ENCODE measurements at regions of chr6 and their contacts with region 1.

Region 1: DNA sequence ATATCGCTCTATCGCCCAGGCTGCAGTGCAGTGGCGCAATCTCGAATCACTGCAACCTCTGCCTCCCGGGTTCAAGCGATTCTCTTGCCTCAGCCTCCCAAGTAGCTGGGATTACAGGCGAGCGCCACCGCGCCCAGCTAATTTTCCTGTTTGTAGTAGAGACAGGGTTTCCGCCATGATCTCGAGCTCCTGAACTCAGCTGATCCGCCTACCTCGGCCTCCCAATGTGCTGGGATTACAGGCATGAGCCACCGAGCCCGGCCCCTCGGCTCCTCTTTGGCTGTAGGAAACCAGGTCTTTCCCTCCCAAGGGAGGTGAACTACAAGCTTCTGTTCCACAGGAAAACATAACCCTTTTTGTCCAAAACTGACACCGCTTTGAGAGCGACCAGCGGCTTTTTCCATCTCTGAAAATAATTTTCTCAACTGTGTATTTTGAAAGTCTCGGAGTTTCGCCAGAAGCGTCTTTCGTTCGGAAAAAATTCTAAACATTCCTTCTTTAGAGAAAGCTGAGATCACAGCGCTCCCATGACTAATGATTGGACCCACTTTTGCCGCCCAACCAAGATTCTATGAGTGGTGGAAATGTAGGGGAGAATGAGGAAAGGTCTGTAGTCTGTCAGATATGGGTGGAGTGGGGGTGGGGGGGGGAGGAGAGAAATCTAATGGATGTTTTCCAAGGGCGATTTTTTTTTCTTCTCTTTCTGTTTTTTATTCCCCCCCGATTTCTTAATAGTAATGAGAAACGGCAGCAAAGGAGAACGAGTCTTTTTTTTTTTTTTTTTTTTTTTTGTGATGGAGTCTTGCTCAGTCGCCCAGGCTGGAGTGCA is 189.4 kb downstream of the TRIM27 start:
- DNase-seq: no peak
- ATAC-seq: no peak
- H3K4me3 ChIP-seq: no peak overlapping the region
- H3K4me3 Mint-ChIP-seq: no peak overlapping the region
- H3K27ac ChIP-seq: no peak overlapping the region
- H3K27ac Mint-ChIP-seq: no peak overlapping the region
- H3K4me1 ChIP-seq: peaks cover under 1% of the 10 kb centered on the region
- H3K4me1 Mint-ChIP-seq: peaks cover 8% of the 10 kb centered on the region
- H3K27me3 ChIP-seq: peaks cover 47 to 71% of the 10 kb centered on the region in 2 experiments
- H3K27me3 Mint-ChIP-seq: peaks cover 84% of the 10 kb centered on the region
- CTCF ChIP-seq: no peak

Region 2: GRCh38 chr6:28383235-28384142 is 350.9 kb before region 1 on chr6:
- CTCF ChIA-PET with region 1: no interaction called
- POLR2A ChIA-PET with region 1: no interaction called
- intact Hi-C with region 1: no loop called
- DNase-seq: peak in 7 of 9 experiments; percentile 2 to 64 (median 35)
- ATAC-seq: peak; percentile 62
- H3K4me3 ChIP-seq: peak overlapping the region; percentile 9 to 17
- H3K4me3 Mint-ChIP-seq: peak overlapping the region; percentile 75
- H3K27ac ChIP-seq: peak overlapping the region in 1 of 2 experiments; percentile 17
- H3K27ac Mint-ChIP-seq: peak overlapping the region; percentile 24
- H3K4me1 ChIP-seq: no peaks in the 10 kb centered on the region
- H3K4me1 Mint-ChIP-seq: peaks cover 19% of the 10 kb centered on the region
- H3K27me3 ChIP-seq: no peaks in the 10 kb centered on the region
- H3K27me3 Mint-ChIP-seq: no peaks in the 10 kb centered on the region
- CTCF ChIP-seq: no peak

Region 3: GRCh38 chr6:28758046-28758817 is 23.9 kb after region 1 on chr6:
- CTCF ChIA-PET with region 1: no interaction called
- POLR2A ChIA-PET with region 1: no interaction called
- intact Hi-C with region 1: loop called in 1 of 2 experiments (anchors 2 kb)
- DNase-seq: no peak
- ATAC-seq: no peak
- H3K4me3 ChIP-seq: no peak overlapping the region
- H3K4me3 Mint-ChIP-seq: no peak overlapping the region
- H3K27ac ChIP-seq: no peak overlapping the region
- H3K27ac Mint-ChIP-seq: no peak overlapping the region
- H3K4me1 ChIP-seq: no peaks in the 10 kb centered on the region
- H3K4me1 Mint-ChIP-seq: peaks cover 2% of the 10 kb centered on the region
- H3K27me3 ChIP-seq: peaks cover 10 to 11% of the 10 kb centered on the region in 2 experiments
- H3K27me3 Mint-ChIP-seq: peaks cover 59% of the 10 kb centered on the region
- CTCF ChIP-seq: no peak

Region 4: GRCh38 chr6:28985462-28986164 is 251.3 kb after region 1 on chr6:
- CTCF ChIA-PET with region 1: no interaction called
- POLR2A ChIA-PET with region 1: no interaction called
- intact Hi-C with region 1: no loop called
- DNase-seq: peak in 2 of 9 experiments; percentile 17 to 36
- ATAC-seq: no peak
- H3K4me3 ChIP-seq: no peak overlapping the region
- H3K4me3 Mint-ChIP-seq: peak overlapping the region; percentile 73
- H3K27ac ChIP-seq: no peak overlapping the region
- H3K27ac Mint-ChIP-seq: no peak overlapping the region
- H3K4me1 ChIP-seq: peaks cover 19% of the 10 kb centered on the region
- H3K4me1 Mint-ChIP-seq: peaks cover 49% of the 10 kb centered on the region
- H3K27me3 ChIP-seq: no peaks in the 10 kb centered on the region
- H3K27me3 Mint-ChIP-seq: peaks cover 23% of the 10 kb centered on the region
- CTCF ChIP-seq: no peak

Measured in CD8-positive, alpha-beta T cell (primary cell).